AG04450 (cell line): ENCODE measurements at regions of chr3 and their contacts with region 1.

Region 1: GRCh38 chr3:111351334-111351733 is 190.7 kb upstream of the CD96 start:
- DNase-seq: no peak
- H3K4me3 ChIP-seq: no peak overlapping the region
- H3K27ac ChIP-seq: no peak overlapping the region
- H3K27me3 ChIP-seq: no peaks in the 10 kb centered on the region
- CTCF ChIP-seq: no peak

Region 2: DNA sequence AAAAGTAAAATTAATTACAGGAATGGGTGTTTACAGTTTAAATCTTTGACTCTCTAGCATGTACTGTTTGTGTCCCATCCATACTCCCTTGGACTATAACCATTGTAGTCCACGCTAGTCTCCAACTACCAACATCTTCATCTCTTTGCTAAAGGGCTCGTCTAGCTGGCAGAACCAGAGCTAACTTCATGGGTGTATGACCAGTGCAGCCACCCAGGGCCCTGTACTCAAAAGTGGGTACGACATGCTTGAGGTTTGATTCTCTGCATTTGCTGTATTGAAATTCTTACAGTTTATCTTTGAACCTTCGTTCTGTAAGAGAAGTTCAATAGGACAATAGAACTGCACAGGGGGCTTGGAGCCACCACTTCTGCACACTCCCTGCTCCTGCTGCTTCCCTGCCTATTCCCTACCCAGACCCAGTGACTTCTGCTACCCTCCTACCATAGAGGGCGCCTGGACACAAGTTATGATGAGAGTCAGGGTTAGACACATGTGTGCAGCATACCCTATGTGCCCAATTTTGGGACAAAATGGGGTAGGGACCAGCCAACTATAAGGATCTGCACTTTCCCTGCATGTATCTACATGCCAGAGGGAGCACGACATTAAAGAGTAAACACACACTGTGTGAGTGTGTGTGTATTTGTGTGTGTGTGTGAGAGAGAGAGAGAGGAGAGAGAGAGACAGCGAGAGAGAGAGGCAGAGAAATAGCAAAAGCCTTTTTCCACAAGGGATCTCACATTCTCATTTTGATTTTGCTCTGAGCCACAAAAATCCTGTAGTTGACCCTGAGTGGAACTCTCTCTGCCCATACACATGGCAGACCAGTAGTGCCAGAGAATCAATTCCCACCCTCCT is 338.7 kb before region 1 on chr3:
- CTCF ChIA-PET with region 1: no interaction called
- POLR2A ChIA-PET with region 1: no interaction called
- DNase-seq: no peak
- H3K4me3 ChIP-seq: no peak overlapping the region
- H3K27ac ChIP-seq: no peak overlapping the region
- H3K27me3 ChIP-seq: no peaks in the 10 kb centered on the region
- CTCF ChIP-seq: no peak

Region 3: DNA sequence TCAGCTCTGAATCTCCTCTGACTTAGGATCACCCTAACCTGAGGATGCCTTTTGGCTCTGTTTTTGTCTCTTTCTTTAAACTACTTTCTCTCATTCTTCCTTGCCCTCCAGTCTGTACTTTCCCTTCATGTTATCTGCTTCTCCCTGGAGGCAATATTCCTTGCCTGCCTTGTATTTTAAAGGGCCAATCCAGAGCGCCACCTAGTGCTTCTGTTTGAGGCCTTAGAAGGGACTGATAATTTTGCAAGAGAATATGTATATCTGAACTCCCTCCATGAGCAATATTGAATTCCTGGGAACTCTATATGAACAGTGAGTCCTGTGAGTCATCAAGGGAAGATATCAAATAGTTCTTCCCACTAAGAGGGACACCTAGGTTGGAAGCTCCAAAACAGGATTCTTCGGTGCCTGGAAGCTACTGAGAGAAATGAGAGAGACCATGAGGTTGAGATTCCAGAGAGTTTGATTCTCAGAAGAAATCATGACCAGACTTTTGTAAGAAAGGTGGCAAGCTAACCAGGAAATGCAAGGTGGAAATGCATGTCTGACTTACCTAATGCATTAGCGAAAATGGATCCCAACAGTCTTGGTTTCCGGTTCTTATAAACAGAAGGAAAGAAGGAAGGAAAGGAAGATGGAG is 13.2 kb before region 1 on chr3:
- CTCF ChIA-PET with region 1: interaction called, 12 read pairs
- POLR2A ChIA-PET with region 1: no interaction called
- DNase-seq: peak; percentile 69
- H3K4me3 ChIP-seq: no peak overlapping the region
- H3K27ac ChIP-seq: no peak overlapping the region
- H3K27me3 ChIP-seq: no peaks in the 10 kb centered on the region
- CTCF ChIP-seq: peak; percentile 92